H1 (cell line): ENCODE measurements at regions of chr3 and their contacts with region 1.

Region 1: GRCh38 chr3:65466300-65466988 is 572.3 kb downstream of the MAGI1 start:
- DNase-seq: peak in 1 of 2 experiments; percentile 61
- H3K4me3 ChIP-seq: no peak overlapping the region
- H3K27ac ChIP-seq: no peak overlapping the region
- H3K4me1 ChIP-seq: peaks cover 0 to 4% (median 2%) of the 10 kb centered on the region in 4 experiments; a peak in 2 of 7 replicates
- H3K27me3 ChIP-seq: no peaks in the 10 kb centered on the region
- CTCF ChIP-seq: peak; percentile 62 to 69 (median 66)
- EP300 ChIP-seq: no peak
- POLR2A ChIP-seq: no peak
- RAD21 ChIP-seq: peak; percentile 86 to 88

Region 2: DNA sequence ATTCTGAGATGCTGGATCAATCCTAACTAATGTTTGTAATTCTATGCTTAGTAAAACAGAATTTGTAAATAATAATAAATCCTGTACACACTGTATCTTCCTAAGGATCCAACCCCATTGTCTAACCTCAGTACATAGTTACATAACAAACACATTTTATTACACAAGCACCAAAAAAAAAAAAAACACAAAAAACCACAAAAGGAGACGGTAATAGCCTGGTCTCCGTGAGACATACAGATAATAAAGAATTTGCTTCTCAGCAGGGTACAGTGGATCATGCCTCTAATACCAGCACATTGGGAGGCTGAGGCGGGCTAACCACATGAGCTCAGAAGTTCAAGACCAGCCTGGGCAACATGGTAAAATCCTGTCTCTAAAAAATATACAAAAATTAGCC is 13.5 kb after region 1 on chr3:
- CTCF ChIA-PET with region 1: interaction called, 23 read pairs
- POLR2A ChIA-PET with region 1: no interaction called
- DNase-seq: no peak
- H3K4me3 ChIP-seq: no peak overlapping the region
- H3K27ac ChIP-seq: no peak overlapping the region
- H3K4me1 ChIP-seq: peaks cover 6 to 44% (median 31%) of the 10 kb centered on the region in 4 experiments
- H3K27me3 ChIP-seq: no peaks in the 10 kb centered on the region
- CTCF ChIP-seq: no peak
- EP300 ChIP-seq: no peak
- POLR2A ChIP-seq: no peak
- RAD21 ChIP-seq: no peak

Region 3: DNA sequence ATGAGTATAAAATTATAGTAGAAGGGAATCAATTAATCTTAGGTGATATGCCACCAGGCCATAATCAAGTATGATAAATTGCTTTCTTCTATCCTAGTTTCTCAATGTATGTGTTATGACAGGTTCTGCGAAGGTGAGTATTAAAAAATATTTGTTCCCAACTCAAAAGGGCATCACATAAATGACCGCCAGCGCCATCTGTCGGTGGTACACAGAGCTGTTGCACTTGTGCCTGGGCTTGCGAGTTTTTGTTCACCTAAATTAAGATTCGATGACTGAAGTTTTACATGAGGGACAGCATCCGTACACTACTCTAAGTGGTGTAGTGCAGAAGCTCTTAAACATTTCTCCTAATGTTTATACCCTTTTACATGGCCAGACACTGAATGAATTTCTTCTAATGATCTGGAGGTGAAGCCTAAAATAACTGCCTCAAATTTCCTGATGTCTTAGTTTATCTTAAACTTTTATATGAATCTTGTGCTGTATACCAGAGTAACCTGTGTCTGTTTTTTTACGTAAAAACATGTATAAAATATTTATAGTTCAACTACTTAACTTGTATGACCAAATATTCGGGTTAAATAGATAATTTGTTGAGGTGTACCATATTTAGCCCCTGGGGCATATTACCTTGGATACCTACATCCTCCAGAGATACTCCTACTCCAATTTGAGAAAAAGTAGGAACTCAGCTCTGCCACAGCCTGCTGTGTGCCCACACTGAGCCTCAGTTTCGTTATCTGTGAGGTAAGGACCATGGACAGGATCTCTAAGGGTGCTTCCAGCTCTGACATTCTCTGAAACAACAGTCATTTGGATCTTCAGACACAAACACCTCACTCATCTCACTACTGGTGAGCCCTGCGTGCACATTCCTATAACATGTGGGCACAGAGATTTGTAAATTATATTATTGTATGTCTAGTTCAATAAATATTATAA is 206.7 kb after region 1 on chr3:
- CTCF ChIA-PET with region 1: interaction called, 11 read pairs
- POLR2A ChIA-PET with region 1: no interaction called
- DNase-seq: peak; percentile 29 to 78
- H3K4me3 ChIP-seq: no peak overlapping the region
- H3K27ac ChIP-seq: no peak overlapping the region
- H3K4me1 ChIP-seq: peaks cover 0 to 5% (median 1%) of the 10 kb centered on the region in 4 experiments; a peak in 2 of 7 replicates
- H3K27me3 ChIP-seq: no peaks in the 10 kb centered on the region
- CTCF ChIP-seq: peak; percentile 70 to 90 (median 77)
- EP300 ChIP-seq: no peak
- POLR2A ChIP-seq: no peak
- RAD21 ChIP-seq: peak; percentile 72 to 79

Region 4: DNA sequence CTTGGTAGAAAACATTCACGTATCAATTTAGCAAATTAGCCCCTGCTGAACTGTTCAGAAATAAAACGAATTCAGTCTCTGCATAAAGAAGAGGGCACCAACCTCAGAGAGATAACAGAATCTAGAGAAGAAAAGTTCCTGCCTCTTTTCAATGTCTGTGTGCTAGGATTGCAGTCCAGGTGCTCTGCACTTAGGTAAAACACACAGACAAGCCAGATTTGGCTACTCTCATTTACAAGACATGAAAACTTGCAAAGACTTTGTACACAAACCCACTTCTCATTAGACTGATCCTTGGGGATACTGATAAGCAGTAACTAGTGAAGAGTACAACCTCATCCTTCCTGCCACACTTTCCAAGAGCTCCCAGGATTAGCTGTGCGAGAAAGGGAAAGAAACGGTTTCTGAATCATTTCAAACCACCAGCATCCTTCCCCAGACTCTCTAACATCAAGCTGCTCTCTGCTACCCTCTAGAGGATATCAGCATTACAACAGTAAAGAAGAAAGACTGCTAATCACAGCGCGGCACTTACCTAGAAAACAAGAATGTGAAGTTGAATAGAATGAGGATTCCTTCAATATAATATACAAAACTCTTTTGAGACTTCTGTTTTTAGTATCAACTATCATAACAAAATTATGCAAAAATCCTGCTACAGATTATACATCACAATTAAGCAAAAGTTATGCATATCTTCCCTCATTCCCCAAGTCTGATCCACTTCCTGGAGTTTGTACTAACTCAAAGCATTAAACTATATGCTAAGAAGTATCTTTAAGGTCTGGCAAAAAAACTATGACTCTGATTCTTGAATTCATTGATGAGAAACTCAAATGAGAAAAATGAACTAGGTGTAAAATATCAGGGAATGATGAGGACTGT is 265.8 kb after region 1 on chr3:
- CTCF ChIA-PET with region 1: interaction called, 10 read pairs
- POLR2A ChIA-PET with region 1: no interaction called
- DNase-seq: no peak
- H3K4me3 ChIP-seq: no peak overlapping the region
- H3K27ac ChIP-seq: no peak overlapping the region
- H3K4me1 ChIP-seq: peaks cover 0 to 12% (median 2%) of the 10 kb centered on the region in 4 experiments; a peak in 5 of 7 replicates
- H3K27me3 ChIP-seq: no peaks in the 10 kb centered on the region
- CTCF ChIP-seq: peak in 2 of 3 experiments; percentile 62 to 84; a peak in 3 of 4 replicates
- EP300 ChIP-seq: no peak
- POLR2A ChIP-seq: no peak
- RAD21 ChIP-seq: peak; percentile 80 to 81